Activated CD4-positive, alpha-beta memory T cell treated with anti-CD3 and anti-CD28 coated beads for 36 hours (primary cell): ENCODE measurements at regions of chr16 and their contacts with region 1.

Region 1: DNA sequence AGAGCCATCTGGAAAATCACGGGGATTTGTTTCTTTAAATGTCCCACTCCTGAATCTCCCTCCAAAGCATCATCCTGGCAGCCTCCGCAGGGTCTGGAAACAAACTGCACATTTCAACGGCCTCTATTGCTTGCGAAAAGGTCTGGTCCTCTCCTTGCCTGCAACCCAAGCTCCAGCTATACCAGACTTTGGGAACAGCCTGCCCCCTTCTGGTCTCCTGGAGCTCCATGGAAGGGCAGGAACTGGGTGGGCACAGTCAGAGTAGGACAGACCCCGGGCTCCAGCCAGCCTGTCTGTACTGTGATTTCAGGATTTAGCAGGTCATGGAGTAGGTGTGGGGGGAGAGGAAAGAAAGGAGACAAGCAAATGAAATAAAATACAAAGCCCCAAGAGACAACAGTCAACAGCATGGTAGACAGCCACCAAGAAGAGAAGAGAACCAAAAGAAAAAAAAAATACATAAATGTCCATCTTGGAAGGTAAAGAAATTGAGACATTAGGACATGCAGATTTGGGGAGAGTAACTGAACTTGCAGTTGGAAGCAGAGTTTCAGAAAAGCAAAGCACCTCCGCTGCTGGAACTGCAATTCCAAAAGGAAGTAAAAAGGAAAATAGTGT is 2.7 kb downstream of the XYLT1 start:
- DNase-seq: peak; percentile 68
- H3K4me3 Mint-ChIP-seq: no peak overlapping the region
- H3K27ac Mint-ChIP-seq: no peak overlapping the region
- H3K4me1 Mint-ChIP-seq: peaks cover 42% of the 10 kb centered on the region
- H3K27me3 Mint-ChIP-seq: no peaks in the 10 kb centered on the region

Region 2: GRCh38 chr16:16861546-16861945 is 606.5 kb before region 1 on chr16:
- CTCF ChIA-PET with region 1: interaction called, 15 read pairs
- POLR2A ChIA-PET with region 1: no interaction called
- intact Hi-C with region 1: loop called (anchors 10 kb)
- DNase-seq: peak; percentile 48
- H3K4me3 Mint-ChIP-seq: no peak overlapping the region
- H3K27ac Mint-ChIP-seq: no peak overlapping the region
- H3K4me1 Mint-ChIP-seq: no peaks in the 10 kb centered on the region
- H3K27me3 Mint-ChIP-seq: peaks cover 5% of the 10 kb centered on the region

Region 3: DNA sequence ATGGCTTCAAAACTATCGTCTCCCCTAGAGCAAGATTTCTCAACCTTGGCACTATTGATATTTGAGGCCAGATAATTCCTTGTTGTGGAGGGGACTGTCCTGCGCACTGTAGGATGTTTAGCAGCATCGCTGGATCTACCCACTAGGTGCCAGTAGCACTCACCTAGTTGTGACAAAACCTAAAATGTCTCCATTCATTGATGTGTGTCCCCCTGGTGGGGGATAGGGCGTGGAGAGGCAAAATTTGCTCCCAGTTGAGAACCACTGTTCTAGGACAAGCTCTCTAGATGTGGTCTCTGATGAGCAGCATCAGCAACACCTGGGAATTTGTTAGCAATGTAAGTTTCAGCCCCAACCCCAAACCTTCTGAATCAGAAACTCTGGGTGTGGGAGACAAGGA is 256.2 kb before region 1 on chr16:
- CTCF ChIA-PET with region 1: no interaction called
- POLR2A ChIA-PET with region 1: no interaction called
- intact Hi-C with region 1: loop called (anchors 5 kb)
- DNase-seq: peak; percentile 43
- H3K4me3 Mint-ChIP-seq: no peak overlapping the region
- H3K27ac Mint-ChIP-seq: no peak overlapping the region
- H3K4me1 Mint-ChIP-seq: peaks cover 6% of the 10 kb centered on the region
- H3K27me3 Mint-ChIP-seq: no peaks in the 10 kb centered on the region

Region 4: DNA sequence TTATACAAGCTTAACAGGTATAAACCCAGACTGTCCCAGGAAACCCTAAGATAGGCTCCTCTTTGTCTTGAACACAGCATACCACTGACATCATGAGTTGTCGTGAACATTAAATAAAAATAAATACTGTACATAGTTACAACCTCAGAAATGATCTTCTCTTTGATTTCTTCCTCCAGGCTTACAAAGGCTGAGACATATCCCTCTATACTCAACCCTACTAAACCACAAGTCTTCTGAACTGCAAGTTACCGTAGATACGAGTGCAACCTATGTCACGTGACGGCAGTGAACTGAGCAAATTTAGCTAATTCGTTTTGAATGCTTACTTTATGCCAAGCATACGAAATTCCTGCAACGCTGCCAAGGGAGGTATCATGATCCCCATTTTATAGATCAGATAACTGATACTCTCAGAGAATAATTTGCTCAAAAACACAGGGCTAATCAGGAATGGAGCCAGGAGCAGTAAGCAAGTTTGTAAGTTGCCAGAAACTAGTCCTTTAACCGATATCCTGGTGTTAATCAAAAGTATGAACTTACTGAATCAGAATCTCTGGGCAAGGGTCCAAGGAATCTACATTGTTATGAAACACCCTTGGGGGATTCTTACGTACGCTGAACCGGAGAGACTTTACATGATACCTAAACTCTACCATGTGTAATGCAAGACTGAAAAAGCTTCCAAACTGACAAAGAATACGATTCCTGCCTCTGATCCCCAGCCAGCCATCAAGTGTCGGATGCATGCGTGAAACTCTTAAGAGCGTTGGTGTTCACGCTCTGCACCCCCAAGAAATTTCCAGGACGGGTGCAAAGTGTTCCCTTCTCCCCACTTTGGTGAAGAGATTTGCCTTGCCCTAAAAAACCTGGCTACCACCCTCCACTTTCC is 103.5 kb before region 1 on chr16:
- CTCF ChIA-PET with region 1: interaction called, 12 read pairs
- POLR2A ChIA-PET with region 1: interaction called, 4 read pairs
- intact Hi-C with region 1: no loop called
- DNase-seq: peak; percentile 72
- H3K4me3 Mint-ChIP-seq: peak overlapping the region; percentile 48
- H3K27ac Mint-ChIP-seq: peak overlapping the region; percentile 83
- H3K4me1 Mint-ChIP-seq: peaks cover 95% of the 10 kb centered on the region
- H3K27me3 Mint-ChIP-seq: no peaks in the 10 kb centered on the region

Region 5: GRCh38 chr16:17590719-17591654 is 123.0 kb after region 1 on chr16:
- CTCF ChIA-PET with region 1: interaction called, 3 read pairs
- POLR2A ChIA-PET with region 1: interaction called, 3 read pairs
- intact Hi-C with region 1: loop called (anchors 5 kb)
- DNase-seq: peak; percentile 79
- H3K4me3 Mint-ChIP-seq: no peak overlapping the region
- H3K27ac Mint-ChIP-seq: peak overlapping the region; percentile 87
- H3K4me1 Mint-ChIP-seq: peaks cover 8% of the 10 kb centered on the region
- H3K27me3 Mint-ChIP-seq: peaks cover 16% of the 10 kb centered on the region